CD4-positive, alpha-beta memory T cell (primary cell): ENCODE measurements at regions of chr12 and their contacts with region 1.

Region 1: DNA sequence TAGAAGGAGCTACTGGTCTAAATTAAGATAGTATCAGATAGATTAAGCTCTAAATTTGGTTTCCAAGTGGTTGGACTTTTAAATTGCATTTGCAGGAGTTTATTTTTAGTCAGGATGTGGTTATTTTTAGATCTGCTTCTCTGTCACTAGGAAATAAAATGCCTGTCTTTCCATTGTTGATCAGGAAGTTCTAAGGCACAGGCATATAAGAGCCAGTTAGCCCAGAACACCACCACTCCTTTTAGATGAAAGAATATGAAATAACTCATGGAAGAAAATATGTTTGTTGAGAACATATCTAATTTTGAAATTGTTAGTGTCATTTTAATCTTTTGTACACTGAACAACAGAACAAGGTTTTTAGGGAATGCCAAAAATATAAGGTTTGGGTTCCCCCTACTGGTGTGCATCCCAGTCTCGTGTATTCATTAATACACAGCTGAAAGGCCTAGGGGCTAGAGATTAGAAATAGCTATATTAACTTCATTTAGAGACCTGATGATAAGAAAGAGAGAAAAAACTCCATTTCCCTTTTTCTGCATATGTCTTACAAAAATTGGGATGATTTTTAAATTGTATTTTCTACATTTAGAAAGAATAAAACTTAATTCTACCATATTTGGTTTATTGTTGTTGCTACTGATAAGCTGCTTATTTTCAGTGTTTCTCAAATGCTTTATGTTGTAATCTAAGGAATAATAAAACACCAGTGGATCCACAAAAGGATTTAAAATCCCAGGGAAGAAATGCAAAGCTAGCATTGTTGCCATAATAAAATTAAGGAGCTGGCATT is 67.2 kb downstream of the RIC8B start:
- DNase-seq: peak; percentile 37 to 47 (median 45)
- H3K4me3 ChIP-seq: no peak overlapping the region
- H3K4me3 Mint-ChIP-seq: no peak overlapping the region
- H3K27ac ChIP-seq: no peak overlapping the region
- H3K27ac Mint-ChIP-seq: peak overlapping the region in 3 of 7 donors; percentile 2 to 57 (median 5)
- H3K4me1 ChIP-seq: peaks cover 17% of the 10 kb centered on the region
- H3K4me1 Mint-ChIP-seq: peaks cover 14 to 28% (median 22%) of the 10 kb centered on the region in 4 donors
- H3K27me3 ChIP-seq: no peaks in the 10 kb centered on the region
- H3K27me3 Mint-ChIP-seq: no peaks in the 10 kb centered on the region

Region 2: GRCh38 chr12:106357549-106358395 is 483.9 kb before region 1 on chr12 and contains the start of gene POLR3B:
- CTCF ChIA-PET with region 1: interaction called, 17 read pairs
- POLR2A ChIA-PET with region 1: interaction called, 3 read pairs
- intact Hi-C with region 1: loop called (anchors 1 kb)
- DNase-seq: peak; percentile 96 to 98 (median 97)
- H3K4me3 ChIP-seq: peak within 1 kb of the TSS; percentile 77 to 87
- H3K4me3 Mint-ChIP-seq: peak within 1 kb of the TSS; percentile 86 to 95 (median 94)
- H3K27ac ChIP-seq: peak within 1 kb of the TSS; percentile 68
- H3K27ac Mint-ChIP-seq: peak within 1 kb of the TSS; percentile 92 to 97 (median 95)
- H3K4me1 ChIP-seq: peaks cover 20% of the 10 kb centered on the region
- H3K4me1 Mint-ChIP-seq: peaks cover 10 to 20% (median 16%) of the 10 kb centered on the region in 4 donors
- H3K27me3 ChIP-seq: no peaks in the 10 kb centered on the region
- H3K27me3 Mint-ChIP-seq: no peaks in the 10 kb centered on the region
- total RNA-seq, gene POLR3B: 6.6 to 7.5 TPM

Region 3: GRCh38 chr12:106386813-106387535 is 454.7 kb before region 1 on chr12:
- CTCF ChIA-PET with region 1: interaction called, 40 read pairs
- POLR2A ChIA-PET with region 1: no interaction called
- intact Hi-C with region 1: loop called (anchors 1 kb)
- DNase-seq: no peak
- H3K4me3 ChIP-seq: no peak overlapping the region
- H3K4me3 Mint-ChIP-seq: no peak overlapping the region
- H3K27ac ChIP-seq: no peak overlapping the region
- H3K27ac Mint-ChIP-seq: no peak overlapping the region
- H3K4me1 ChIP-seq: no peaks in the 10 kb centered on the region
- H3K4me1 Mint-ChIP-seq: peaks cover 0 to 4% (median 0%) of the 10 kb centered on the region in 4 donors
- H3K27me3 ChIP-seq: no peaks in the 10 kb centered on the region
- H3K27me3 Mint-ChIP-seq: no peaks in the 10 kb centered on the region

Region 4: GRCh38 chr12:106455111-106455510 is 386.6 kb before region 1 on chr12:
- CTCF ChIA-PET with region 1: no interaction called
- POLR2A ChIA-PET with region 1: no interaction called
- intact Hi-C with region 1: loop called (anchors 5 kb)
- DNase-seq: no peak
- H3K4me3 ChIP-seq: no peak overlapping the region
- H3K4me3 Mint-ChIP-seq: peak overlapping the region in 1 of 8 donors; percentile 1
- H3K27ac ChIP-seq: no peak overlapping the region
- H3K27ac Mint-ChIP-seq: no peak overlapping the region
- H3K4me1 ChIP-seq: no peaks in the 10 kb centered on the region
- H3K4me1 Mint-ChIP-seq: peaks cover 4 to 10% (median 7%) of the 10 kb centered on the region in 4 donors
- H3K27me3 ChIP-seq: no peaks in the 10 kb centered on the region
- H3K27me3 Mint-ChIP-seq: no peaks in the 10 kb centered on the region

Region 5: DNA sequence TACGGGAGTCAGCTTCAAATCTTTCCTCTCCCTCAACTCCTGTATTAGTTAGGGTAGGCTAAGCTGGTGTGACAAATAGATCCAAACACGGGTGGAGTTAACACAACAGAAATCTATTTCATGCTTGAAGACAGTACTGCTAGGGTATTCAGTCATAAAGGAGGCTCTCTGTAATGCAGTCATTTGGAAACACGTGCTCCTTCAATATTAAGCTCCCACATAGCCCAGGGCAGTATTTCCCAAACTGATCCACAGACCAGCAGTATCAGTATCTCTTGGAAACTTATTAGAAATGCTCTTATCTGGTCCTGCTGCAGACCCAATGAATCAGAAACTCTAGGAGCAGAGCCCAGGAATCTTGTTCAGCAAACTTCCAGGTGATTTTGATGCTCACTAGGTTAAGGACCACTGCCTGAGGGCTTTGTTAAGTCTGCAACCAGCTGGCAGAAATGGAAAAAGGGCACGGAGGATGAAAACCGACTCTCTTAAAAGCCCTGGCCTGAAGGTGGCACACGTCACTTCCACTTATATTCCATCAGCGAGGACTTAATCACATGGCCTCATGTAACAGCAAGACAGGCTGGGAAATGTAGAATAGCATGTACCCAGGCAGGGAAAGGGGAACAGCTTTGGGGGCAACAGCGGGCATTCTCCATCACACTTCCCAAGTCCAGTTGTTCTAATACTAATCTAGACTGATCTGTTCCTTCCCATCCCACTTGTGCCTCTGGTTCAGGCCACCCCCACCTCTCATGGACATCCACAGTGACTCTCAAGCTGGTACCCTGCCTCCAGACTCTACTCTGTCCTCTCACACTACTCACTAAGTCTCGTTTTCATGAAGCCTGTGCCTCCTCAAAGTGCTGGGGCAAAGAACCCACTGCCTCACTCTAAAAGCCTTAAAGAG is 105.4 kb before region 1 on chr12:
- CTCF ChIA-PET with region 1: interaction called, 41 read pairs
- POLR2A ChIA-PET with region 1: interaction called, 3 read pairs
- intact Hi-C with region 1: loop called (anchors 1 kb)
- DNase-seq: peak in 4 of 5 donors; percentile 25 to 40 (median 31)
- H3K4me3 ChIP-seq: no peak overlapping the region
- H3K4me3 Mint-ChIP-seq: no peak overlapping the region
- H3K27ac ChIP-seq: no peak overlapping the region
- H3K27ac Mint-ChIP-seq: peak overlapping the region in 1 of 7 donors; percentile 65
- H3K4me1 ChIP-seq: no peaks in the 10 kb centered on the region
- H3K4me1 Mint-ChIP-seq: peaks cover 1 to 14% (median 9%) of the 10 kb centered on the region in 4 donors
- H3K27me3 ChIP-seq: no peaks in the 10 kb centered on the region
- H3K27me3 Mint-ChIP-seq: no peaks in the 10 kb centered on the region

Region 6: DNA sequence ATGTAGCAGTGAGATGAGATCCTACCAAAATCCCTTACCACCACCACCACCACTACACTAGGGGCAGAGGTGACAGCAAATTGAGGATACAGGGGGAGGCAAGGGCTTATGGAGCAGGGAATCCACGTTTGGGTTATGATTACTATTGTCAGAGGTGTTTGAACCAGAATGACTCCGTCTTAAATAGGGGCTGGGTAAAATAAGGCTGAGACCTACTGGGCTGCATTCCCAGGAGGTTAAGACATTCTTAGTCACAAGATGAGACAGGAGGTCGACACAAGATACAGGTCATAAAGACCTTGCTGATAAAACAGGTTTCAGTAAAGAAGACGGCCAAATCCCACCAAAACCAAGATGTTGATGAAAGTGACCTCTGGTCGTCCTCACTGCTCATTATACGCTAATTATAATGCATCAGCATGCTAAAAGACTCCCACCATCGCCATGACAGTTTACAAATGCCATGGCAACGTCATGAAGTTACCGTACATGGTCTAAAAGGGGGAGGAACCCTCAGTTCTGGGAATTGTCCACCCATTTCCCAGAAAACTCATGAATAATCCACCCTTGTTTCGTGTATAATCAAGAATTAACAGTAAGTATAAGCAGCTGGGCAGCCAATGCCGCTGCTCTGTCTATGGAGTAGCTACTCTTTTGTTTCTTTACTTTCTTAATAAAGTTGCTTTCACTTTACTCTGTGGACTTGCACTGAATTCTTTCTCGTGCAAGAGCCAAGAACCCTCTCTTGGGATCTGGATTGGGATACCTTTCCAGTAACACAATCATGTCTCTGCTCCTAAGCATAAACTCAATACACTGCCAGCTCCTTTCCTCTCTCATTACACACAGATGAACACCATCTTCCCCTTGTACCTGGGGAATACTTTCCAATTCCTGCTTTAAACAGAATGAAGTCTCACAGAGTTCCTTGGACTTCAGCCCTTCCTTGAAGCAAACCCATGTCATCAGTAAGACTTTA is 268.3 kb after region 1 on chr12:
- CTCF ChIA-PET with region 1: interaction called, 4 read pairs
- POLR2A ChIA-PET with region 1: no interaction called
- intact Hi-C with region 1: loop called (anchors 10 kb)
- DNase-seq: no peak
- H3K4me3 ChIP-seq: no peak overlapping the region
- H3K4me3 Mint-ChIP-seq: no peak overlapping the region
- H3K27ac ChIP-seq: no peak overlapping the region
- H3K27ac Mint-ChIP-seq: no peak overlapping the region
- H3K4me1 ChIP-seq: no peaks in the 10 kb centered on the region
- H3K4me1 Mint-ChIP-seq: peaks cover 0 to 3% (median 0%) of the 10 kb centered on the region in 4 donors
- H3K27me3 ChIP-seq: no peaks in the 10 kb centered on the region
- H3K27me3 Mint-ChIP-seq: peaks cover 8 to 20% of the 10 kb centered on the region in 2 donors